ENCODE measurements at regions of chr14 and their contacts with region 1.

Region 1: GRCh38 chr14:21092273-21093011 is 6.0 kb downstream of the ZNF219 start:
- DNase-seq: no peak
- H3K4me3 ChIP-seq: no peak overlapping the region
- CTCF ChIP-seq: peak; percentile 100

Region 2: GRCh38 chr14:20904393-20905029 is 187.9 kb before region 1 on chr14:
- CTCF ChIA-PET with region 1: no interaction called
- POLR2A ChIA-PET with region 1: no interaction called
- DNase-seq: no peak
- H3K4me3 ChIP-seq: no peak overlapping the region
- CTCF ChIP-seq: no peak

Region 3: DNA sequence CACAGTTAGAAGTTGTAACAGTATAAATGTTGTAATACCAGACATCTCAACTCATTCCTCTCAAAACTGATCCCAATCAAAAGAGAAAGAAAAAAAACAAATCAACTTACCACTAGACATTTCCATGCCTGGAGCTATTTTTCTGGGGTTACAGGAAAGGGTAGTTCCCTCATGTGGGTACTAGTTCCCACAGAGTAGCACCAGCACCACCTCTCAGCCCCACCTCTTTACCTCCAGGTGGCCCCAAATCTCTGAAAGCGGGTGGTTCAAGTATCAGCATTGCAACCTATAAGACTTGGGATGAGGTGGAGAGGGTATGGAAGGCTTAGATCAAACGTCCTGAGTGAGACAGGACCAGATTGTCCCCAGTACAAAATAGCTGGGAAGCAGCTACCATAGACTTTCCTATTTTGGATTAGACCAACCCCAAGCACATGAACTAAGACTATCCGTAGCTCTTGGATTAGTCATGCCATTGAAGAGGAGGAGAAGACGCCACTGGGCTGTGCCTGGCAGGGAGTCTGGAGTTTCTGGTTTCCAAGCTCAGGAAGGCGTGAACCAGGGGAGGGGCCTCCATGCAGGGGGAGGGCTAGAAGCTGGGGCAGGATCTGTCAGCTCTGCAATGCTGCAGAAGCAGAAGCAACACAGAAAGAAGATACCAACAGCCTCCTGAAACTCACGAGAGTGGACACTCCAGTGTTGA is 93.6 kb before region 1 on chr14 and contains the start of gene SLC39A2:
- CTCF ChIA-PET with region 1: interaction called, 15 read pairs
- POLR2A ChIA-PET with region 1: no interaction called
- DNase-seq: peak; percentile 21
- H3K4me3 ChIP-seq: no peak within 1 kb of the TSS
- CTCF ChIP-seq: no peak

Region 4: DNA sequence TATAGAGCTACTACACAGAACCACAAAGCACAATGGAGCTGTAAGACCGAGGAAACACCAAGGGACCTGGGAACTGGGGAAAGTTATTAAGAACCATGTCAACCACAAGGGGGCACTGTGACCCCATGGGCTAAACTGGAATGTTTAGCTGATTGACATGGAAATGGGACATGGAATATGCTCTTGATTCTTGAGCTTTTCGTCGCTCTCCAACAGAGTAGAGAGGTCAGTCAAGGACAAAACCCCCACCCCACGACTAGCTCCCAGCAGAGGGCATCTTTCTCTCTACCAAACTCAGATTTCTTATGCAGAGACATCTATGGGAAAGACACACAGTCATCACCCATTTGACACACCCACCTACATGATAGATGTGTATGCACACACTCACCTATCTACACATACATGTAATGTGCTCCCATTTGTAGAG is 77.7 kb before region 1 on chr14:
- CTCF ChIA-PET with region 1: interaction called, 325 read pairs
- POLR2A ChIA-PET with region 1: interaction called, 3 read pairs
- DNase-seq: peak; percentile 23
- H3K4me3 ChIP-seq: no peak overlapping the region
- CTCF ChIP-seq: peak; percentile 82

Region 5: DNA sequence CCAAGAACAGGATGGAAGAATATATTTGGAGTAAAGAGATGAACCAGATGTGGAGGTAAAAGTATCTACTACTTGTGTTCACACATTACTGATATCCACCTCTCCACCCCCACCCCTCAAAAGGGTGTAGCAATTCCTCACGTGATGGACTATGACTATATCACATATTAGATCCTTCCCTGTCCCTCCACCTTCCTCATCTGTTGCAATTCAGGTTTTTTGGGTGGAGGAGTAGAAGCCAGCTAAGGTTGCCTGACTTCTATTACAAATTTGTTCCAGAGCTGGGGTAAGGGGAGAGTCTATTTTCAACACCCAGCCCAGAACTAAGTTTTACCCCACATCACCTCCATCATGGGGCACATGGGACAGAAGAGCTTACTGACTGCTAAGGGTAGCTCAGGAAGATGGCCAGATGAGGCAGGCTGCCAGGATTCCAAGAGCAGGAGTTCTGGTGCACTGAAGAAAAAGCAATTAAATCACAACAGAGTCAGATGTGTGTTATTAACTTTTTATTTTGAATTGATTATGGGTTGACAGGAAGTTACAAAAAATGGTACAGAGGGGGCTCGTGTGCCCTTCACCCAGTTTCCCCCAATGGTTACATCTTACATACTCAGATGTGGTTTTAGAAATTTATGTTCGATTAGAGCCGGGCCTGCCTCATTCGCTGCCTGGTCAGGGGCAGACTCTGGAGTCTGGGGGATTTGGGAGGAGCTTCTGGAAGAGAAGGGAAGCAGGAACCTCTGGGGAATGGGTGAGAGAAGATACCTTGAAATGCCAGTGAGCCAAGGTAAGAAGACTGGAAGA is 59.9 kb before region 1 on chr14:
- CTCF ChIA-PET with region 1: interaction called, 13 read pairs
- POLR2A ChIA-PET with region 1: no interaction called
- DNase-seq: no peak
- H3K4me3 ChIP-seq: no peak overlapping the region
- CTCF ChIP-seq: no peak

Region 6: DNA sequence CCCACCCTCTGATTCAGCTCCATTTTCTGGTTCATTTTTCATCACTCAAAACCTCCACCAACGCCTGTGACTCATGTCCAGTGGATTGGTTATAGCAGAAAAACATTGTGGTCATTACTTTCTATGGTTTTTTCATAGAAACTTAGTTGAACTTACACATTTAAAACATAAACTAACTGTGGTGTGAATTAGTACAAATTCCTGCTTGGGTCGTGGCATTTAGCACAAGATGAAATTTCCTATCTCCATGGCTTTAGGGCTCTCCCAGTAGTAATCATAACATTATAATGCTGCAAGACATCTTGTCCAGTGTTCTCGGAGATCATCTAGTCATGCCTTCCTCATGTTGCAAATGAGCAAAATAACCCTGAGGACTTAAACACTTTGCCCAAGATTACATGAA is 43.2 kb before region 1 on chr14:
- CTCF ChIA-PET with region 1: interaction called, 29 read pairs
- POLR2A ChIA-PET with region 1: interaction called, 3 read pairs
- DNase-seq: no peak
- H3K4me3 ChIP-seq: no peak overlapping the region
- CTCF ChIP-seq: no peak

Region 7: DNA sequence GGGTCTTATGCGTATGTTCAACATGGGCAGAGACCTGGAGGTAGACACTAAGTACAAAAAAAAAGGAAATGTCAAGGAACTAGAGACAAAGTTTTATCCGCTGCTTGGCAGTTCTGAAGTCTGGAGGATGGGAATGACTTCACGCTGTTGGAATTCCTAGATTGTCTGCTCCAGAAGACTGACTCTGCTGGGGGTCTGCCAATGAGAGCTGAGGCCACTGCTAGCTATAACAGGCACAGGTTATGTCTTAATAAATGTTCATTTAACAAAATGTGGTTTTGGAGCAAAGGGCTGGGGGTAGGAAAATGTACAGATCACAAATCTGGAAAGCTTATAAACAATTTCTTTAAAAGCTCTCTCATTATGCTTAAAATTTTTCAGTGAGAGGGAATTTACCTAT is 29.0 kb before region 1 on chr14:
- CTCF ChIA-PET with region 1: interaction called, 220 read pairs
- POLR2A ChIA-PET with region 1: interaction called, 3 read pairs
- DNase-seq: no peak
- H3K4me3 ChIP-seq: no peak overlapping the region
- CTCF ChIP-seq: no peak

Region 8: DNA sequence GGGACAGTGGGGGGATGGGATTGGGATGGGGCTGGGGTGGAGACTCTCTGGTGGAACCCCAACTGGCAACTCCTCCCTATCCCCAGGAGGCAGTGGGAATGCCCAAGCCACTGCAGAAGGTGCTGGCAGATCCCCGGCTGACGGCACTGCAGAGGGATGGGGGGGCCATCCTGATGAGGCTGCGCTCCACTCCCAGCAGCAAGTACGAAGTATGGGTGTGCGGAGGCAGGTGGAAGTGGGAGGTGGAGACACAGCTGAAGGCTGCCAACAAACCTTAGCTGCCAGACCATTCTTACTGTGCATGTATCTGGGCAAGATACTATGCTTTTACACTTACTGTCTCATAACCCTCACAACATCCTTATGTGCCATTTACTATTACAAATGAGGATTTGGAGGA is 14.2 kb before region 1 on chr14:
- CTCF ChIA-PET with region 1: interaction called, 164 read pairs
- POLR2A ChIA-PET with region 1: interaction called, 25 read pairs
- DNase-seq: no peak
- H3K4me3 ChIP-seq: no peak overlapping the region
- CTCF ChIP-seq: no peak